Heart right ventricle (tissue), 16 donors: ENCODE measurements at regions of chr13 and their contacts with region 1.

Region 1: DNA sequence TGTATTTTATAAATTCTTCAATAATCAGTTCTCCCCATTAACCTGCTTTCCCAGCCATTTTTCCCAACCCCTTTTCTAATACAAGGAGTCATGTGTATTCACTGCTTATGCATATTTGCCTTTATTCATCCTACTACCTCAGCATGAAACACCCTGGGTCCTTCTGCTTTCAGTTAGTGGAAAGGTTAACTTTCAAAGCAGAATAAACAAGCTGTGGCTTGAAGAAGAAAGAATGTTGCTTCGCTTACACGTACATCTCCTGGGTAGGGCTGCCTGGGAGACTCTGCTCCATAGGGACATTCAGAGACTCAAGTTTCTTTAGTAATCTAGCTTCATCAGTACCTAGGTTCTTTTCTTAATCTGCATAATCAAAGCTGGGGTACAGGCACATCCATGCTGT is 567.8 kb upstream of the SLC10A2 start:
- DNase-seq: no peak
- ATAC-seq: no peak
- H3K4me3 ChIP-seq: no peak overlapping the region
- H3K27ac ChIP-seq: no peak overlapping the region
- H3K4me1 ChIP-seq: peaks cover 0 to 3% (median 0%) of the 10 kb centered on the region in 9 donors
- H3K27me3 ChIP-seq: no peaks in the 10 kb centered on the region
- CTCF ChIP-seq: no peak

Region 2: GRCh38 chr13:103031332-103031873 is 602.7 kb before region 1 on chr13:
- intact Hi-C with region 1: no loop called
- DNase-seq: no peak
- ATAC-seq: no peak
- H3K4me3 ChIP-seq: no peak overlapping the region
- H3K27ac ChIP-seq: no peak overlapping the region
- H3K4me1 ChIP-seq: no peaks in the 10 kb centered on the region
- H3K27me3 ChIP-seq: no peaks in the 10 kb centered on the region
- CTCF ChIP-seq: no peak

Region 3: DNA sequence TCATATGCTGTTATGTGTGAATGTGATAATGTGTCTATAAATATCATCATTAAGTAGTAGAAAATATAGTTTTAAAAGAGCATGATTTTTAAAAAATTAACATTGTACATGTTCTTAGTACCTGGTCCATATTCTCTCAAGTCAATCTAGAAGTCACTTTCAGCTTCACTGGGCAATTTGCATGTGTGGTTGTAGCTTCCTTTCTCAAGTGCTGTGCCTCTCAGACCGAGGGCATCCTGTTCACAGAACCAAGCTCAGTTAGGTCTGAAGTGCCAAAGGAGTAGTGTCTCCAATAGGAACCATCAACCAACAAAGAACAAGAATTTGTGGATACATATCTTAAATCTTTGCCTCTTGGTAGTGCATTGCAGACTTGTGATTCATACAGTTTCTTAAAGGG is 26.1 kb before region 1 on chr13:
- intact Hi-C with region 1: loop called in 1 of 10 experiments (anchors 1 kb)
- DNase-seq: no peak
- ATAC-seq: no peak
- H3K4me3 ChIP-seq: no peak overlapping the region
- H3K27ac ChIP-seq: no peak overlapping the region
- H3K4me1 ChIP-seq: no peaks in the 10 kb centered on the region
- H3K27me3 ChIP-seq: no peaks in the 10 kb centered on the region
- CTCF ChIP-seq: no peak